ENCODE measurements at regions of chr16 and their contacts with region 1.

Region 1: DNA sequence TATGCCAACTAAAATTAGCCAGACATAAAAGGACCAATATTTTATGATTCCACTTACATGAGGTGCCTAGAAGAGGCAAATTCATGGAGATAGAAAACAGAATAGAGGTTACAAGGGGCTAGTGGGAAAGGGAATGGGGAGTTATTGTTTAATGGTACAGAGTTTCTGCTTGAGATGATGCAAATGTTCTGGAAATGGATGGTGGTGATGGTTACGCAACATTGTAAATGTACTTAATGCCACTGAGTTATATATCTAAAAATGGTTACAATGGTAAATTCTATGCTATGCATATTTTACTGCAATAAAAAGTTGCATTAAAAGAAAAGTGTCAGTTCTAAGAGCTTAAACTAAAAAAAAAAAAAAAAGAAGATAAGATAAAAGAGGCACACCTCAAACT is 17.9 kb downstream of the MT1X start:
- DNase-seq: no peak
- ATAC-seq: no peak
- H3K4me3 Mint-ChIP-seq: no peak overlapping the region
- H3K27ac Mint-ChIP-seq: no peak overlapping the region
- H3K4me1 Mint-ChIP-seq: peaks cover 17% of the 10 kb centered on the region
- H3K27me3 Mint-ChIP-seq: peaks cover 2% of the 10 kb centered on the region
- CTCF ChIP-seq: no peak

Region 2: GRCh38 chr16:56554441-56554840 is 145.8 kb before region 1 on chr16:
- CTCF ChIA-PET with region 1: no interaction called
- POLR2A ChIA-PET with region 1: no interaction called
- DNase-seq: no peak
- ATAC-seq: no peak
- H3K4me3 Mint-ChIP-seq: no peak overlapping the region
- H3K27ac Mint-ChIP-seq: no peak overlapping the region
- H3K4me1 Mint-ChIP-seq: peaks cover 3% of the 10 kb centered on the region; the same call in 1 of the 2 replicates
- H3K27me3 Mint-ChIP-seq: peaks cover 5% of the 10 kb centered on the region; the same call in 1 of the 2 replicates
- CTCF ChIP-seq: no peak

Region 3: GRCh38 chr16:56576585-56577293 is 123.5 kb before region 1 on chr16:
- CTCF ChIA-PET with region 1: interaction called, 24 read pairs
- POLR2A ChIA-PET with region 1: no interaction called
- DNase-seq: peak; percentile 90
- ATAC-seq: peak; percentile 100
- H3K4me3 Mint-ChIP-seq: no peak overlapping the region
- H3K27ac Mint-ChIP-seq: no peak overlapping the region
- H3K4me1 Mint-ChIP-seq: no peaks in the 10 kb centered on the region
- H3K27me3 Mint-ChIP-seq: peaks cover 4% of the 10 kb centered on the region
- CTCF ChIP-seq: peak; percentile 84

Region 4: GRCh38 chr16:56608043-56608875 is 91.9 kb before region 1 on chr16 and contains the start of gene MT2A:
- CTCF ChIA-PET with region 1: interaction called, 39 read pairs
- POLR2A ChIA-PET with region 1: interaction called, 6 read pairs
- DNase-seq: peak; percentile 89
- ATAC-seq: peak; percentile 85
- H3K4me3 Mint-ChIP-seq: peak within 1 kb of the TSS; percentile 79
- H3K27ac Mint-ChIP-seq: peak within 1 kb of the TSS; percentile 18; the same call in 1 of the 2 replicates
- H3K4me1 Mint-ChIP-seq: peaks cover 43% of the 10 kb centered on the region
- H3K27me3 Mint-ChIP-seq: peaks cover 68% of the 10 kb centered on the region
- CTCF ChIP-seq: no peak
- total RNA-seq, gene MT2A: 139 to 173 TPM (median 149 TPM) in 3 replicates

Region 5: DNA sequence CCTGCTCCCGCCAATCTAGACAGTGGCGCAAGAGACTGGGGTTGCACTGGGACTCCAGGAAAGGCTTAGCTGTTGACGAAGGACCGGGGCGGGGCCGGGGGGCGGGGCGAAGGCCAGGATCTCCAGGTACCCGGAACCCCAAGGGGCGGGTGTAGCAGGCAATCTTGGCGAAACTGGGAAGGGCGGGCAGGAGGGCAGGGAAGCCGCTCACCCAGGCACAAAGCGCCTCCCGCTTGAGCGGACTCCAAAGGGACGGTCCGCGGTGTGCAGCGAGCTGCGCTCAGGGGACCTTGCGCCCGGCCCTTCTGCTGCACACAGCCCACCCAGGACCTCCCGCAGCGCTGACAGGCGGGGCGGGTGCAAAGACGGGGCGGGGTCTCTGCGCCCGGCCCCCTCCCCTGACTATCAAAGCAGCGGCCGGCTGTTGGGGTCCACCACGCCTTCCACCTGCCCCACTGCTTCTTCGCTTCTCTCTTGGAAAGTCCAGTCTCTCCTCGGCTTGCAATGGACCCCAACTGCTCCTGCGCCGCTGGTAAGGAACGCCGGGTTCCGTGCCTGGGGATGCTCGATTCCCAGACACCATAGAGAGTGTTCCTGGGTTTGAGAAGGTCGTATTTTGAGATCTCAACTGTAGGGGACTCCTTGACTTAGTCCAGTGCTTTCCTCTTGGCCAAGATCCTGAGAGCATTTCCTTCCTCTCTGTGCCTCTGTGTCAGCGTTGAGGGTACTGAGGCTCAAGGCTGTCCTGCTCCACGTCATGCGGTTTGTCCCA is 42.5 kb before region 1 on chr16 and contains the start of gene MT1F:
- CTCF ChIA-PET with region 1: interaction called, 24 read pairs
- POLR2A ChIA-PET with region 1: no interaction called
- DNase-seq: peak; percentile 92
- ATAC-seq: peak; percentile 88
- H3K4me3 Mint-ChIP-seq: peak within 1 kb of the TSS; percentile 95
- H3K27ac Mint-ChIP-seq: peak within 1 kb of the TSS; percentile 74; the same call in 1 of the 2 replicates
- H3K4me1 Mint-ChIP-seq: peaks cover 26% of the 10 kb centered on the region
- H3K27me3 Mint-ChIP-seq: peaks cover 85% of the 10 kb centered on the region
- CTCF ChIP-seq: no peak
- total RNA-seq, gene MT1F: 50.6 to 60.2 TPM (median 58.2 TPM) in 3 replicates

Region 6: GRCh38 chr16:56681939-56682702 is 18.1 kb before region 1 on chr16 and contains the start of gene MT1X:
- CTCF ChIA-PET with region 1: interaction called, 30 read pairs
- POLR2A ChIA-PET with region 1: interaction called, 7 read pairs
- DNase-seq: peak; percentile 85
- ATAC-seq: peak; percentile 89
- H3K4me3 Mint-ChIP-seq: peak within 1 kb of the TSS; percentile 88
- H3K27ac Mint-ChIP-seq: peak within 1 kb of the TSS; percentile 75
- H3K4me1 Mint-ChIP-seq: peaks cover 42% of the 10 kb centered on the region
- H3K27me3 Mint-ChIP-seq: peaks cover 17% of the 10 kb centered on the region
- CTCF ChIP-seq: no peak
- total RNA-seq, gene MT1X: 328 to 466 TPM (median 465 TPM) in 3 replicates

Region 7: GRCh38 chr16:56814537-56815432 is 114.6 kb after region 1 on chr16:
- CTCF ChIA-PET with region 1: no interaction called
- POLR2A ChIA-PET with region 1: no interaction called
- DNase-seq: no peak
- ATAC-seq: no peak
- H3K4me3 Mint-ChIP-seq: no peak overlapping the region
- H3K27ac Mint-ChIP-seq: peak overlapping the region; percentile 14; the same call in 1 of the 2 replicates
- H3K4me1 Mint-ChIP-seq: peaks cover 3% of the 10 kb centered on the region; the same call in 1 of the 2 replicates
- H3K27me3 Mint-ChIP-seq: no peaks in the 10 kb centered on the region
- CTCF ChIP-seq: no peak

Measured in WTC11 (cell line).